ENCODE measurements at regions of chr11 and their contacts with region 1.

Region 1: DNA sequence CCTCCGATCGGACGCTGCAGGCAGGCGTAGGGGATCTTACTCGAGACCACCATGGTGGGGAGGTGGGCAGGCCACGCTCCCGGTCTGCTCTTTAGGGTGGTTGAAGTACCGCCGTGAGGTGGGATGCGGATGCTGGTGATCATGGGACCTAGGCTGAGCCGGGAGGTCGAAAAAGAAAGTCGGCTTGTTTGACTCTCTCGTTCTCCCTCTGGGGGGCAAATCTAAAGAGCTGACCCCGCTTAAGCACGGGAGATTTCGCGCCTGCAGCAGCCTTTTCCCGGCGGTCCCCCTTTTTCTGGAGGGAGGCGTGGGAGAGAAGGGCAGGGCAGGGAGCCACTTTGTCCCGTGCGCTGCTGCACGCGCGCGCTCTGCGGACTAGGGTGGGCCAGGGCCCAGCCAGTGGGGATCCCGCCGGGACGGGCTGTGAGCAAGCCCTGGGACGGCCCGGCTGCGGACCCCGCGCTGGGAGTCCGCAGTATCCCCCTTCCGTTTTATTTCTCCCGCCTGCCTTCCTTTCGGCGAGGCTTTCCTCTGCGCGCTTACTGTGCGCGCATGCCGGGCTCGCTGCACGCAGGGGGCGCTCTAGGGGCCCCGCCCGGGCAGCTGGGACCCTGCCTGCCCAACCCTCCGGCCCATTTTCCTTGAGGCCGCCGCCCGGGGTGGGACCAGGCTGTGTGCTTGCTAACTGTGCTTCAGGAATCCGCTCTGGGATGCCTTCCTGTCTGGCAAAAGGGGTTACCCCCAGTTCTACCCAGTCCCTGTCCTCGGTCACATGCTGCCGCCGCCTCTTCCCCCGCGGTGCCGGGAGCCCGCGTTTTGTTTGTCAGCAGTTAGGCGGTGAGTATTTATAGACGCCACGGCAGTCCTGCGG is 81.0 kb downstream of the PRR5L start:
- DNase-seq: peak; percentile 34 to 41 (median 39)
- H3K4me3 ChIP-seq: peak overlapping the region; percentile 69 to 86 (median 80)
- H3K4me3 Mint-ChIP-seq: peak overlapping the region; percentile 96 to 99
- H3K27ac ChIP-seq: peak overlapping the region in 1 of 2 donors; percentile 59
- H3K27ac Mint-ChIP-seq: peak overlapping the region; percentile 31 to 89 (median 67)
- H3K4me1 ChIP-seq: peaks cover 24 to 62% of the 10 kb centered on the region in 2 donors
- H3K4me1 Mint-ChIP-seq: peaks cover 59% of the 10 kb centered on the region
- H3K27me3 ChIP-seq: peaks cover 8 to 38% of the 10 kb centered on the region in 2 donors
- H3K27me3 Mint-ChIP-seq: peaks cover 38 to 59% (median 41%) of the 10 kb centered on the region in 3 donors
- CTCF ChIP-seq: peak; percentile 79

Region 2: GRCh38 chr11:36313750-36314433 is 63.2 kb before region 1 on chr11:
- intact Hi-C with region 1: no loop called
- DNase-seq: no peak
- H3K4me3 ChIP-seq: no peak overlapping the region
- H3K4me3 Mint-ChIP-seq: no peak overlapping the region
- H3K27ac ChIP-seq: no peak overlapping the region
- H3K27ac Mint-ChIP-seq: no peak overlapping the region
- H3K4me1 ChIP-seq: no peaks in the 10 kb centered on the region
- H3K4me1 Mint-ChIP-seq: peaks cover 2% of the 10 kb centered on the region
- H3K27me3 ChIP-seq: peaks cover 0 to 5% of the 10 kb centered on the region in 2 donors
- H3K27me3 Mint-ChIP-seq: peaks cover 0 to 12% (median 4%) of the 10 kb centered on the region in 3 donors
- CTCF ChIP-seq: no peak

Region 3: GRCh38 chr11:36411202-36411640 is 34.1 kb after region 1 on chr11:
- intact Hi-C with region 1: loop called (anchors 5 kb)
- DNase-seq: peak; percentile 96 to 97 (median 96)
- H3K4me3 ChIP-seq: peak overlapping the region in 1 of 3 experiments; percentile 55
- H3K4me3 Mint-ChIP-seq: peak overlapping the region; percentile 27 to 67
- H3K27ac ChIP-seq: peak overlapping the region; percentile 81 to 95
- H3K27ac Mint-ChIP-seq: peak overlapping the region; percentile 90 to 97 (median 95)
- H3K4me1 ChIP-seq: peaks cover 68 to 70% of the 10 kb centered on the region in 2 donors
- H3K4me1 Mint-ChIP-seq: peaks cover 74% of the 10 kb centered on the region
- H3K27me3 ChIP-seq: no peaks in the 10 kb centered on the region
- H3K27me3 Mint-ChIP-seq: no peaks in the 10 kb centered on the region
- CTCF ChIP-seq: no peak

Region 4: GRCh38 chr11:36421546-36422155 is 44.5 kb after region 1 on chr11:
- intact Hi-C with region 1: no loop called
- DNase-seq: no peak
- H3K4me3 ChIP-seq: no peak overlapping the region
- H3K4me3 Mint-ChIP-seq: no peak overlapping the region
- H3K27ac ChIP-seq: no peak overlapping the region
- H3K27ac Mint-ChIP-seq: peak overlapping the region in 5 of 7 donors; percentile 12 to 95 (median 53)
- H3K4me1 ChIP-seq: peaks cover 23 to 31% of the 10 kb centered on the region in 2 donors
- H3K4me1 Mint-ChIP-seq: peaks cover 41% of the 10 kb centered on the region
- H3K27me3 ChIP-seq: no peaks in the 10 kb centered on the region
- H3K27me3 Mint-ChIP-seq: peaks cover 2 to 3% (median 3%) of the 10 kb centered on the region in 3 donors
- CTCF ChIP-seq: no peak

Region 5: GRCh38 chr11:36469881-36470802 is 93.0 kb after region 1 on chr11:
- intact Hi-C with region 1: loop called in 1 of 2 experiments (anchors 5 kb)
- DNase-seq: no peak
- H3K4me3 ChIP-seq: no peak overlapping the region
- H3K4me3 Mint-ChIP-seq: no peak overlapping the region
- H3K27ac ChIP-seq: no peak overlapping the region
- H3K27ac Mint-ChIP-seq: no peak overlapping the region
- H3K4me1 ChIP-seq: peaks cover 0 to 9% of the 10 kb centered on the region in 2 donors
- H3K4me1 Mint-ChIP-seq: peaks cover 10% of the 10 kb centered on the region
- H3K27me3 ChIP-seq: no peaks in the 10 kb centered on the region
- H3K27me3 Mint-ChIP-seq: peaks cover 0 to 3% (median 2%) of the 10 kb centered on the region in 3 donors
- CTCF ChIP-seq: no peak

Region 6: GRCh38 chr11:36619502-36619901 is 242.4 kb after region 1 on chr11:
- intact Hi-C with region 1: no loop called
- DNase-seq: no peak
- H3K4me3 ChIP-seq: no peak overlapping the region
- H3K4me3 Mint-ChIP-seq: peak overlapping the region in 1 of 2 donors; percentile 28
- H3K27ac ChIP-seq: no peak overlapping the region
- H3K27ac Mint-ChIP-seq: no peak overlapping the region
- H3K4me1 ChIP-seq: peaks cover 6 to 10% of the 10 kb centered on the region in 2 donors
- H3K4me1 Mint-ChIP-seq: peaks cover 18% of the 10 kb centered on the region
- H3K27me3 ChIP-seq: no peaks in the 10 kb centered on the region
- H3K27me3 Mint-ChIP-seq: no peaks in the 10 kb centered on the region
- CTCF ChIP-seq: no peak

Measured in CD14-positive monocyte (primary cell).